ENCODE measurements at regions of chr16 and their contacts with region 1.

Region 1: DNA sequence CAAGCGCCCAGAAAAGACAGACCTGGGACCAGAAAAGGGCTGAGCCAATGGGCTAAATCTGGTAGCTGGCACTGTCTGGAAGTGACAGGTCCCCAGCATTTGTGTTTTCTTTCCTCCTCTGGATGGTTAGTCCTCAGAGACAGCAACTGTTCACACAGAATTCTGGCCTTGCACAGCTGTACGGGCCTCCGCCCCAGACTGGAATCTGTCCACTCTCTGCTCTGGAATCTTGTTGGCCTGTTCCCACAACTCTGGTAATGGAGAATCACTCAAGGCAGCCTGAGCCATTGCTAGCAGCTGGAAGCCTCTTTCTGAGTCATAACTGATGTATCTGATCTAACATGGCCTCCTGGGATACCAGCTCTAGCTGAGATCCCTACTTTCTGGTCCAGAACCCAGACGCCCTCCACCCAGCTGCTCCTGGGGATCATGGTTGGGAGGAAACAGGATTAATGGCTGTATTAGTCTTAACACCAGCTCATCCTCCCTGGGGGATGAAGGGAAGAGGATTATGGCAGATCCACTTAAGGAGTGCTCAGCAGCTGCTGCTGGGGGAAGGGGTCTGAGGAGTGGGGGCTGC is 9.1 kb downstream of the ZNF668 start:
- DNase-seq: no peak
- ATAC-seq: no peak
- H3K4me3 ChIP-seq: no peak overlapping the region
- H3K27ac ChIP-seq: no peak overlapping the region
- H3K4me1 ChIP-seq: peaks cover 0 to 19% of the 10 kb centered on the region in 2 experiments; a peak in 3 of 5 replicates
- H3K27me3 ChIP-seq: no peaks in the 10 kb centered on the region
- CTCF ChIP-seq: no peak
- EP300 ChIP-seq: no peak
- POLR2A ChIP-seq: no peak
- RAD21 ChIP-seq: no peak

Region 2: DNA sequence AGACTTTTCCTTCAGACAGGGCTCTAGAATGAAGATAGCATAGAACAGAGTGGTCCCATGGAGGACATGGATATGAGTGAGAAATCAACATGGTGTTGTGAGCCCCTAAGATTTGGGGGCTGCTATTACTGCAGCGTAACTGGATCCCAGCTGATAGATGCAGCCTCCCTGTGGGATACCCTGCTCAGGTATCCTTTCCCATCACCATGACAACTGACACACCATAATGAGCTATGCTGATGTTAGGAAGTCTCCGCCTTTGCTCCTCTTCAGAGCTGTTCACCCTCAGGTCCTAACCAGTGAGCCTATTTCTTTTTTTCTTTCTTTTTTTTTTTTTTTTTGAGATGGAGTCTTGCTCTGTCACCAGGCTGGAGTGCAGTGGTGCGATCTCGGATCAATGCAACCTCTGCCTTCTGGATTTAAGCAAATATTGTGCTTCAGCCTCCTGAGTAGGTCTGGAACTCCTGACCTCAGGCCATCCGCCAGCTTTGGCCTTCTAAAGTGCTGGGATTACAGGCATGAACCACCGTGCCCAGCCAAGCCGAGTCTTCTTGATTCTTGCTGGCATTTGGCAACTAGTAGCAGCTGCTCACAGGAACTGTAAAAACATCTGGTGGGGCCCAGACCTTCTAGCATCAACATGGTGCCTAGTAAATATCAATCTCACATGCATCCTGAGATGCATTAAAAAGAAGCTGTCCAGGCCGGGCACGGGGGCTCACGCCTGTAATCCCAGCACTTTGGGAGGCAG is 14.5 kb before region 1 on chr16:
- CTCF ChIA-PET with region 1: no interaction called
- POLR2A ChIA-PET with region 1: interaction called, 10 read pairs
- in situ Hi-C with region 1: no loop called
- intact Hi-C with region 1: no loop called
- DNase-seq: no peak
- ATAC-seq: no peak; the same call in 2 of the 3 replicates
- H3K4me3 ChIP-seq: no peak overlapping the region
- H3K27ac ChIP-seq: no peak overlapping the region
- H3K4me1 ChIP-seq: peaks cover 0 to 3% of the 10 kb centered on the region in 2 experiments; a peak in 2 of 5 replicates
- H3K27me3 ChIP-seq: peaks cover 3 to 8% of the 10 kb centered on the region in 2 experiments; a peak in 3 of 5 replicates
- CTCF ChIP-seq: no peak
- EP300 ChIP-seq: no peak
- POLR2A ChIP-seq: no peak
- RAD21 ChIP-seq: no peak